Colonic mucosa (tissue), 4 donors: ENCODE measurements at regions of chr22 and their contacts with region 1.

Region 1: DNA sequence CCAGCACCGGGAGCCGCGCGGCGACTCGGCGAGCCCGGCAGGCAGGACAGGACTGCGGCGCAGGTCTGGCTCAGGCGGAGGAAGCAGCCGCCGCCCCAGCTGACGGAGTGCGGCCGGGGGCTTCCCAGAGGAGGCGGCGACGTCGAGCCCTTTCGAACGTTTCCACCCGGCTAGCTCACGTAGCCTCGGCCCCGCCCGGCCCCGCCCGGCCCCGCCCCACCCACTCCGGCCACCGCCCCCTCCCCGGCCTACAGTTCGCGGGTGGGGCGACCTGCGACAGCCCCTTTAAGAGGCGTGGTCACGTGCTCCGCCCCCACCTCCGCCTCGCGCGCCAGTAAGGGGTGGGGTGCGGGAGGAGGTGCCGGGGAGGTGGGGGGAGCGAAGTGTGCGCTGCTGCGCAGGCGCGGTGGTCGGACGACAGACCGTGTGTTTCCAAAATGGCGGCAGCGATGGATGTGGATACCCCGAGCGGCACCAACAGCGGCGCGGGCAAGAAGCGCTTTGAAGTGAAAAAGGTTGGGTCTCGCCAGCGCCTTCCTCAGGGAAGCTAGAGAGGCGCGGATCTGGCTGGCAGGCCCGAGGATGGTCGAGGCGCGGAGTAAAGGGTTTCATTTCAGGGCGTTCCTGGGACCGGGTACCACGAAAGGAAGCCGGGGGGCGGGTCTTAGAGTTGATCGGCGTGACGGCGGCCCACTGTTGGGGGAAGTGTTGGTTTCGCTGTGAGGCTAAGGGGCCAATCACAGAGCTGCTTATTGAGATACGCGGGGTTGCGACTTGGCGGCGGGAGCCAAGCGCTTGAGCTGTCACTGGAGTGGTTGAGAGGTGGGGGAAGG is at the start of gene RBX1:
- DNase-seq: peak; percentile 98
- H3K4me3 ChIP-seq: peak within 1 kb of the TSS; percentile 67
- H3K27ac ChIP-seq: peak within 1 kb of the TSS; percentile 91
- H3K4me1 ChIP-seq: peaks cover 4% of the 10 kb centered on the region
- H3K27me3 ChIP-seq: no peaks in the 10 kb centered on the region
- CTCF ChIP-seq: no peak
- total RNA-seq, gene RBX1: 37.7 to 46.0 TPM

Region 2: GRCh38 chr22:41022470-41023298 is 71.5 kb after region 1 on chr22:
- intact Hi-C with region 1: loop called (anchors 5 kb)
- DNase-seq: peak; percentile 94
- H3K4me3 ChIP-seq: peak overlapping the region; percentile 65
- H3K27ac ChIP-seq: peak overlapping the region; percentile 99
- H3K4me1 ChIP-seq: peaks cover 4% of the 10 kb centered on the region
- H3K27me3 ChIP-seq: no peaks in the 10 kb centered on the region
- CTCF ChIP-seq: no peak

Region 3: GRCh38 chr22:41091132-41092022 is 140.2 kb after region 1 on chr22:
- intact Hi-C with region 1: loop called (anchors 5 kb)
- DNase-seq: peak; percentile 99
- H3K4me3 ChIP-seq: peak overlapping the region; percentile 96
- H3K27ac ChIP-seq: peak overlapping the region; percentile 97
- H3K4me1 ChIP-seq: no peaks in the 10 kb centered on the region
- H3K27me3 ChIP-seq: no peaks in the 10 kb centered on the region
- CTCF ChIP-seq: no peak

Region 4: DNA sequence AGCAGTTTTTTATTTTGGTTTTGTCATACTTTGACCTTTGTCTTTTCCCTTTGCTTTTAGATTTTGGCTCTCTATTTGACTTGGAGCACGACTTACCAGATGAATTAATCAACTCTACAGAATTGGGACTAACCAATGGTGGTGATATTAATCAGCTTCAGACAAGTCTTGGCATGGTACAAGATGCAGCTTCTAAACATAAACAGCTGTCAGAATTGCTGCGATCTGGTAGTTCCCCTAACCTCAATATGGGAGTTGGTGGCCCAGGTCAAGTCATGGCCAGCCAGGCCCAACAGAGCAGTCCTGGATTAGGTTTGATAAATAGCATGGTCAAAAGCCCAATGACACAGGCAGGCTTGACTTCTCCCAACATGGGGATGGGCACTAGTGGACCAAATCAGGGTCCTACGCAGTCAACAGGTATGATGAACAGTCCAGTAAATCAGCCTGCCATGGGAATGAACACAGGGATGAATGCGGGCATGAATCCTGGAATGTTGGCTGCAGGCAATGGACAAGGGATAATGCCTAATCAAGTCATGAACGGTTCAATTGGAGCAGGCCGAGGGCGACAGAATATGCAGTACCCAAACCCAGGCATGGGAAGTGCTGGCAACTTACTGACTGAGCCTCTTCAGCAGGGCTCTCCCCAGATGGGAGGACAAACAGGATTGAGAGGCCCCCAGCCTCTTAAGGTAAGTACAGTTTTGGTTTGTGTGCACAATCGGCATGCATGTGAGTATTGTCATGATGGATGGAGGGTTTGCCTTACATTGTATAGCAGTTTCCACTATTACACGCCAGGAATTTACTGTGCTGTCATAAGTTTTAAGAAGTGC is 166.2 kb after region 1 on chr22:
- intact Hi-C with region 1: no loop called
- DNase-seq: no peak
- H3K4me3 ChIP-seq: no peak overlapping the region
- H3K27ac ChIP-seq: no peak overlapping the region
- H3K4me1 ChIP-seq: no peaks in the 10 kb centered on the region
- H3K27me3 ChIP-seq: no peaks in the 10 kb centered on the region
- CTCF ChIP-seq: no peak